Spleen (tissue), 13 donors: ENCODE measurements at regions of chr20 and their contacts with region 1.

Region 1: GRCh38 chr20:33731693-33732165 is at the start of gene ZNF341:
- DNase-seq: peak; percentile 98
- H3K4me3 ChIP-seq: peak within 1 kb of the TSS; percentile 44 to 77 (median 60)
- H3K27ac ChIP-seq: peak within 1 kb of the TSS; percentile 87 to 98 (median 95)
- H3K4me1 ChIP-seq: peaks cover 9 to 41% (median 29%) of the 10 kb centered on the region in 6 donors
- H3K27me3 ChIP-seq: no peaks in the 10 kb centered on the region
- CTCF ChIP-seq: peak; percentile 69 to 97 (median 91)
- POLR2A ChIP-seq: no peak
- total RNA-seq, gene ZNF341: 3.3 to 6.7 (median 4.4) TPM

Region 2: GRCh38 chr20:33561692-33562601 is 169.8 kb before region 1 on chr20:
- intact Hi-C with region 1: no loop called
- DNase-seq: no peak
- H3K4me3 ChIP-seq: peak overlapping the region in 1 of 8 donors; percentile 15
- H3K27ac ChIP-seq: peak overlapping the region in 5 of 8 donors; percentile 14 to 46 (median 37)
- H3K4me1 ChIP-seq: peaks cover 0 to 38% (median 14%) of the 10 kb centered on the region in 6 donors
- H3K27me3 ChIP-seq: no peaks in the 10 kb centered on the region
- CTCF ChIP-seq: no peak
- POLR2A ChIP-seq: no peak

Region 3: GRCh38 chr20:33832103-33832804 is 100.5 kb after region 1 on chr20:
- intact Hi-C with region 1: loop called (anchors 10 kb)
- DNase-seq: no peak
- H3K4me3 ChIP-seq: no peak overlapping the region
- H3K27ac ChIP-seq: peak overlapping the region in 4 of 8 donors; percentile 12 to 49 (median 28)
- H3K4me1 ChIP-seq: peaks cover 24 to 98% (median 75%) of the 10 kb centered on the region in 6 donors
- H3K27me3 ChIP-seq: no peaks in the 10 kb centered on the region
- CTCF ChIP-seq: no peak
- POLR2A ChIP-seq: no peak